Aorta (tissue), 5 donors: ENCODE measurements at regions of chr4 and their contacts with region 1.

Region 1: GRCh38 chr4:114364857-114365256 is 233.8 kb upstream of the UGT8 start:
- DNase-seq: no peak
- ATAC-seq: peak; percentile 15
- H3K4me3 ChIP-seq: no peak overlapping the region
- H3K27ac ChIP-seq: no peak overlapping the region
- H3K4me1 ChIP-seq: peaks cover 0 to 2% of the 10 kb centered on the region in 2 donors
- H3K27me3 ChIP-seq: no peaks in the 10 kb centered on the region

Region 2: GRCh38 chr4:113645771-113646441 is 719.0 kb before region 1 on chr4:
- intact Hi-C with region 1: no loop called
- DNase-seq: no peak
- ATAC-seq: peak; percentile 59
- H3K4me3 ChIP-seq: no peak overlapping the region
- H3K27ac ChIP-seq: peak overlapping the region in 1 of 2 donors; percentile 27
- H3K4me1 ChIP-seq: peaks cover 5 to 6% of the 10 kb centered on the region in 2 donors
- H3K27me3 ChIP-seq: no peaks in the 10 kb centered on the region

Region 3: GRCh38 chr4:114281164-114281960 is 83.5 kb before region 1 on chr4:
- intact Hi-C with region 1: loop called in 1 of 2 experiments (anchors 5 kb)
- DNase-seq: no peak
- ATAC-seq: peak; percentile 56
- H3K4me3 ChIP-seq: no peak overlapping the region
- H3K27ac ChIP-seq: peak overlapping the region in 1 of 2 donors; percentile 30
- H3K4me1 ChIP-seq: peaks cover 0 to 1% of the 10 kb centered on the region in 2 donors
- H3K27me3 ChIP-seq: no peaks in the 10 kb centered on the region